ENCODE measurements at regions of chr2 and their contacts with region 1.

Region 1: DNA sequence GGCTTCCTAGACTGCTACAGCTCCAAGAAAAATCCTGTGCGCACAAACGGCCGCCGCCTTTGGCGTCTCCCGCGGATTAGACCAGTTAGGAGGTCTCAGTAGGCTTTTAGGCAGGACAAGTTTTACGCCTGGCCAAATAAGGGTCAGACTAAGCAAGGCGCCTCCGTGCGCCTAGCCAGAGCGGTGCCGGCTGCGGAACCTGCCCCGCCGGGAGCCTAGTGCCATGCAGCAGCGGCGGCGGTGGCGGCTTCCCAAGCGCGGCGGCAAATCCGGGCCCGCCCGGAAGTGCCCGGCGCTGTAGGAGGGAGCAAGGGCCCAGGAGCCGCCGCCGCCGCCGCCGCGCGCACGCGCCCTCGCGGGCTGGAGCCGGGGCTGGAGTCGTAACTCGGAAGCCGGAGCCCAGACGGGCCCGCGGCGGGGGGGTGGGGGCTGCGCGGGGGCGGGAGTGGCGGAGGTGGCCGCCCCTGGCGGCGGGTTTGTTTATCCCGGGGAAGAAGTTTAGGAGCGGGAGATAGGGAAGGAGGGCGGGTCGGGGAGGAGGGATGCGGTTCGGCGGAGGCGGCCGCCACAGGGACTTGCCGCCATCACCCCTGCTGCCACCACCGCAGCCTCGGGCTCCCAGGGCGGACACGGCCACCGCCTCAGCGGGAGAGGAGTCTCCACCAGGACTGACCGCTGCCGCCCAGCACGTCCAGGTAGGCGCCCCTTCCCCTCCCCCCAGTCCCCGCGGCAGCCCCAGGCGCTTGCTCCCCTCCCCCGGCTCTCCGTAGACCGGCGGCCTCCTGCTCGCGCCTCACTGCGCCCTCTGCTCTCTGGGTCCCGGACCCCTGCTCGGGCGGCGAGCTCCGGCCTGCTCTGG is at the start of gene SPOPL:
- DNase-seq: peak; percentile 81 to 93
- ATAC-seq: peak; percentile 90 to 94
- H3K4me3 ChIP-seq: peak within 1 kb of the TSS; percentile 65 to 93 (median 83)
- H3K27ac ChIP-seq: peak within 1 kb of the TSS; percentile 87 to 93 (median 90)
- H3K4me1 ChIP-seq: peaks cover 36 to 42% of the 10 kb centered on the region in 2 donors
- H3K27me3 ChIP-seq: no peaks in the 10 kb centered on the region
- CTCF ChIP-seq: peak in 4 of 5 experiments; percentile 11 to 55 (median 32)
- POLR2A ChIP-seq: peak; percentile 53 to 66
- total RNA-seq, gene SPOPL: 11.2 to 17.7 (median 12.5) TPM

Region 2: DNA sequence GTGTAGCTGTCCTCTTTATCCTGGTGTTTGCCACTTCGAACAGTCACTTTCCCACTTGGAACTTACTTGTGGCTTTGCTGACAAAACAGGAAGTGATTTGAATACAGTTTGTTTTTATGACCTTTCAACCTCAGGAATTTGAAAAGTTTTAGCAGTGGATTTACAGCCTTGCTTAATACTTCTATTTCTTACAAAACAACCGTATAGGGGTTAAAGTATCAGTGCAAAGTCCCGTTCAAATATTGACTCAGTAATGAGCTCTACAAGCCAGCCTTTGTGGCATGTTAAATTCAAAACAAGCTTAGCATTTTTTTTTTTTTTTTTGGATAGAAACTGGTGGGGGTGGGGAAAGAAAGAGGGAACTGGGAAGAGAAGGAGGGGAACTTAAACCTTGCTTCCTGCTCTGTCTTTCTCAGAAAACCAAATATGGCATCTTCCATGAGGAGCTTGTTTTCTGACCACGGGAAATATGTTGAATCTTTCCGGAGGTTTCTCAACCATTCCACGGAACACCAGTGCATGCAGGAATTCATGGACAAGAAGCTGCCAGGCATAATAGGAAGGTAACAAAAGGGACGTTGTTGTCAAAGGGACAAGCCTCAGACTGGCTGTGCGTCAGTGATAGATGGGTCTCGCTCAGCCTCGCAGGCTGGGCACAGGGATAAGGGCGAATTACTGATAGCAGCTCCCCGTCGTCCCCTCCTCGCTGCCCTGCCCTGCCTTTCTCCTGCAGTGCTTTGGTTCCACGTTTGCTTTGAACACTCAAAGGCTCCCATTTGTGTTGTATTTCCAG is 537.4 kb before region 1 on chr2 and contains the start of gene HNMT:
- in situ Hi-C with region 1: no loop called
- intact Hi-C with region 1: loop called (anchors 10 kb)
- DNase-seq: no peak
- ATAC-seq: peak; percentile 66 to 73
- H3K4me3 ChIP-seq: peak within 1 kb of the TSS; percentile 40 to 54 (median 46)
- H3K27ac ChIP-seq: peak within 1 kb of the TSS; percentile 52 to 74 (median 58)
- H3K4me1 ChIP-seq: peaks cover 1 to 6% of the 10 kb centered on the region in 2 donors
- H3K27me3 ChIP-seq: no peaks in the 10 kb centered on the region
- CTCF ChIP-seq: no peak
- POLR2A ChIP-seq: peak in 1 of 2 donors; percentile 25
- total RNA-seq, gene HNMT: 7.6 to 21.5 (median 8.8) TPM

Region 3: GRCh38 chr2:138447889-138448570 is 53.6 kb before region 1 on chr2:
- in situ Hi-C with region 1: no loop called
- intact Hi-C with region 1: no loop called
- DNase-seq: no peak
- ATAC-seq: no peak
- H3K4me3 ChIP-seq: no peak overlapping the region
- H3K27ac ChIP-seq: no peak overlapping the region
- H3K4me1 ChIP-seq: no peaks in the 10 kb centered on the region
- H3K27me3 ChIP-seq: no peaks in the 10 kb centered on the region
- CTCF ChIP-seq: no peak
- POLR2A ChIP-seq: no peak

Region 4: GRCh38 chr2:138548796-138549195 is 47.1 kb after region 1 on chr2:
- in situ Hi-C with region 1: no loop called
- intact Hi-C with region 1: loop called (anchors 5 kb)
- DNase-seq: no peak
- ATAC-seq: no peak
- H3K4me3 ChIP-seq: no peak overlapping the region
- H3K27ac ChIP-seq: no peak overlapping the region
- H3K4me1 ChIP-seq: peaks cover 13 to 14% of the 10 kb centered on the region in 2 donors
- H3K27me3 ChIP-seq: no peaks in the 10 kb centered on the region
- CTCF ChIP-seq: no peak
- POLR2A ChIP-seq: no peak

Region 5: DNA sequence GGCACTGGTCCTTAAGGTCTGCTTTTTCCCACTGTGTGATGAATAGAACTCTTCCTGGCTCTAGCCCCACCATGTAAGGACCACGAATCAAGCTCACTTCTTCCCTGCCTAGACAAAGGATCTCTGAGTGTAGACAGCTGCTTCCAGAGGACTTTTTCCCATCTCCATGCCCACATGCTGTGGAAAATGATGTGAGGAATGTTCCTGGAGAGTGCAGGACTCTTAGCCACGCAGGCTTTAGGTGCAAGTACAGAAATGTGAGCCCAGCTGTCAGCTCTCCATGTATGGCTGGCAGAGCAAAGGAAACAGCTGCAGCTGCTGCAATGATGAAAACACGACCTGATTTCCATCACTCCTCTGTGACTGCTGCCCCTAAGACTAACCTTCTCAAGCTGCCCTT is 243.1 kb after region 1 on chr2:
- in situ Hi-C with region 1: no loop called
- intact Hi-C with region 1: no loop called
- DNase-seq: peak; percentile 17 to 25
- ATAC-seq: peak; percentile 79 to 88
- H3K4me3 ChIP-seq: no peak overlapping the region
- H3K27ac ChIP-seq: no peak overlapping the region
- H3K4me1 ChIP-seq: peaks cover 0 to 13% of the 10 kb centered on the region in 2 donors
- H3K27me3 ChIP-seq: no peaks in the 10 kb centered on the region
- CTCF ChIP-seq: no peak
- POLR2A ChIP-seq: no peak

Measured in gastrocnemius medialis (tissue), 4 donors.